Common myeloid progenitor, CD34-positive (primary cell): ENCODE measurements at regions of chr9 and their contacts with region 1.

Region 1: DNA sequence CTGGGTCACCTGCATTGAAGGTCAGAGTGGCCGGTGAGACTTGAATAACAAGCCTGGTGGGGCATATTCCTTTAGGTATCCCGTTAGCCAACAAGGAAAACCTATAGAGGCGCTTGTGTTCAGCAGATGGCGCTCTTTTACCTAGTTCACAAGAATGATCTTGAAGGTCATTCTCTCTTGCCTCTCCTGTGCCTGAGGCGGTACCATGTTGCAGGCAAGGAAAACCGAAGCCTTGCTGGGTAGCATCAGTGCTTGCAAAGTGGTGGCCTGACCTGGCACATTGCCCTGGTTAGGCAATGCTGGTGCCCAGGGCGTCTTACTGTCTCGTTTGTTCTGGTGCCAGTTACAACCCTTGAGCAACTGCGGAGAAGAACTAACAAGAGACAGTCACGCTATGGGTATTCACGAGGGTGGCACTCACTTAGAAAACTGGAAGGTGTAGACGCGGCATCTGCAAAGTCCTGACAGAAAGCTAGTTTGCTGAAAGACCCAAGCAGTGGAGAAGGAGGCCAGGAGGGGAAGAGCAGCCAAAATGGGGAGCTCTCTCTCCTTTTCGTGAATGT is 56.7 kb downstream of the AOPEP start:
- DNase-seq: peak; percentile 72 to 79 (median 75)
- H3K4me3 ChIP-seq: no peak overlapping the region
- H3K27ac ChIP-seq: no peak overlapping the region
- H3K4me1 ChIP-seq: peaks cover 0 to 4% (median 0%) of the 10 kb centered on the region in 4 experiments
- H3K27me3 ChIP-seq: no peaks in the 10 kb centered on the region

Region 2: DNA sequence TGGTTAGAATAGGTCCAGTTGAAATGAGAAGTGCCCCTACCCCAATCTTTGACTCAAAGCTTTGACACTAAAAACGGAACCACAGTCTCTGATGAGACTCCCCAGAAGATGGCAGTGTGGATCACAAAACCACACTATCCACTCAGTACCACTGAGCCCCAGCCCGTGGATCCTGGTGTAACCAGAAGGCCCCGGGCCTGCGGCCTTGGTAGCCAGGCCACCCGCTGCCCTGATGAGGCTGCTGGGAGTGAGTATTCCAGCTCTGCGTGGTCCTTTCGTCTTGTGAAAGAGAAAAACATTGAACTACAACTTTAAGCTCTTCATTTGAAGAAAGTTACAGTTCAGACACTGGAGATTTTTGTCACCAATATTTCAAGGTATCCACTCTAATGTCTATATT is 101.7 kb before region 1 on chr9:
- CTCF ChIA-PET with region 1: interaction called, 15 read pairs
- POLR2A ChIA-PET with region 1: no interaction called
- DNase-seq: peak; percentile 64 to 79 (median 77)
- H3K4me3 ChIP-seq: no peak overlapping the region
- H3K27ac ChIP-seq: no peak overlapping the region
- H3K4me1 ChIP-seq: peaks cover 0 to 1% (median 0%) of the 10 kb centered on the region in 4 experiments
- H3K27me3 ChIP-seq: peaks cover 0 to 13% (median 2%) of the 10 kb centered on the region in 5 experiments

Region 3: DNA sequence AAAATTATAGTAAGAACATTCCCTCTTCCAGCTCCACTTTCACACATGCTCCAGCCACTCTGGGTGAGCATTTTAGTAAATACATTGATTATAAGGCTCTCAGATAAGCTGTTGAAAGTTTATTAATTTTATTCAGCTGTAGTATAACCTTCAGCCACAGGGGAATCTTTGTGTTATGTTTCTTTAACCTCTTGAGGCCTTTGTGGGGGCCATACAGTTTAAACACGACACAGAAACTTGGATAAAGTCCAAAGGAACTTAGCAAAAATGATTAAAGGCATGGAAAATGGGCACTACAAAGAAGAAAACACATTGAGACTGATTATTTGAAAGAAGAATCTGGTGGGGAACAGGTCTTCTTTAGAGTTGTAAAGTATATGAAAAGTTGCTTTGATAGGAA is 13.5 kb after region 1 on chr9:
- CTCF ChIA-PET with region 1: interaction called, 25 read pairs
- POLR2A ChIA-PET with region 1: interaction called, 4 read pairs
- DNase-seq: peak in 1 of 3 donors; percentile 13
- H3K4me3 ChIP-seq: no peak overlapping the region
- H3K27ac ChIP-seq: no peak overlapping the region
- H3K4me1 ChIP-seq: peaks cover 0 to 3% (median 0%) of the 10 kb centered on the region in 4 experiments
- H3K27me3 ChIP-seq: no peaks in the 10 kb centered on the region

Region 4: GRCh38 chr9:94853887-94854286 is 70.7 kb after region 1 on chr9:
- CTCF ChIA-PET with region 1: interaction called, 19 read pairs
- POLR2A ChIA-PET with region 1: no interaction called
- DNase-seq: no peak
- H3K4me3 ChIP-seq: no peak overlapping the region
- H3K27ac ChIP-seq: no peak overlapping the region
- H3K4me1 ChIP-seq: no peaks in the 10 kb centered on the region
- H3K27me3 ChIP-seq: no peaks in the 10 kb centered on the region

Region 5: GRCh38 chr9:94920398-94921091 is 137.4 kb after region 1 on chr9:
- CTCF ChIA-PET with region 1: interaction called, 97 read pairs
- POLR2A ChIA-PET with region 1: no interaction called
- DNase-seq: no peak
- H3K4me3 ChIP-seq: no peak overlapping the region
- H3K27ac ChIP-seq: no peak overlapping the region
- H3K4me1 ChIP-seq: peaks cover 0 to 5% (median 2%) of the 10 kb centered on the region in 4 experiments
- H3K27me3 ChIP-seq: no peaks in the 10 kb centered on the region